ENCODE measurements at regions of chr5 and their contacts with region 1.

Region 1: DNA sequence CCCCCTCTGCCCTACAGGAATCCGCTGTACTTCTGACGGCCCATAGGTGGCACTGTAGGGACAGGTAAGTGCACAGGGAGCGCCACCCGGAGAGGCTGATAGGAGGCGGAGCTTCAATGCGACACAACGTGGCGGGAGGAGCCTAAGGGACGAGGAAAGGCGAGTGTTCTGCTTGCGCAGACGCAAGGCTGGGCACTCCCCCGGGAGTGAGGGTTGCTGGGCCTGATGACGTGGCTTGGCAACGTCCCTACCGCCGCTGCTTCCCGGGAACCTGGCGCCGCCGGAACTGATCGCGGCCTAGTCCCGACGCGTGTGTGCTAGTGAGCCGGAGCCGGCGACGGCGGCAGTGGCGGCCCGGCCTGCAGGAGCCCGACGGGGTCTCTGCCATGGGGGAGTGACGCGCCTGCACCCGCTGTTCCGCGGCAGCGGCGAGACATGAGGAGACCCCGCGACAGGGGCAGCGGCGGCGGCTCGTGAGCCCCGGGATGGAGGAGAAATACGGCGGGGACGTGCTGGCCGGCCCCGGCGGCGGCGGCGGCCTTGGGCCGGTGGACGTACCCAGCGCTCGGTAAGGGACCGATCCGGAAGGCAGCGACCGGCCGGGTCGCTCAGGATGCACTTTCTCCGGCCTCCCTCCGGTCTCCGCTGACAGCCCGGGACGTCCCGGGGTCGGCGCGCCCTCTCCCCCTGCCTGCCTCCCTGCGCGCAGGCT is at the start of gene SLC30A5:
- DNase-seq: peak; percentile 99 to 100
- H3K4me3 ChIP-seq: peak within 1 kb of the TSS; percentile 73 to 87 (median 84)
- H3K27ac ChIP-seq: peak within 1 kb of the TSS; percentile 93 to 99 (median 98)
- H3K4me1 ChIP-seq: peaks cover 15 to 47% (median 37%) of the 10 kb centered on the region in 4 donors
- H3K27me3 ChIP-seq: no peaks in the 10 kb centered on the region
- CTCF ChIP-seq: peak in 6 of 7 experiments; percentile 70 to 99 (median 92)
- EP300 ChIP-seq: no peak
- POLR2A ChIP-seq: peak in 2 of 4 donors; percentile 17 to 88
- total RNA-seq, gene SLC30A5: 9.3 to 67.6 (median 64.7) TPM

Region 2: DNA sequence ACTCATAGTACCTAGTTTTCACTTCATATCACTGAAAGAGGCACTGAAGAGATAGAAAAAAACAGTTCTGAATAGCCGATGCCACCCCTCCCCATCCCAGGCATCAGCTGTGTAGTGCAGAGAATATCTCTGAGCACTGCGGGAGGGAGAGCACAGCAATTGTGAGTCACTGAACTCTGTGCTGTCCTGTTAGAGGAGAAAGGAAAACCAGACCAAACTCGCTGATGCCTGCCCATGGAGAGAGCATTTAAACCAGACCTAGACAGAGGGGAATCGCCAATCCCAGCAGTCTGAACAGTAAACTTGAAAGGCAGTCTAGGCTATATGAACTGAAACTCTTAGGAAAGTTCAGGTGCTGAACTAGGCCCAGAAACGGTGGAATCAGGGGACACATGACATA is 120.2 kb before region 1 on chr5:
- intact Hi-C with region 1: no loop called
- DNase-seq: no peak
- H3K4me3 ChIP-seq: no peak overlapping the region
- H3K27ac ChIP-seq: no peak overlapping the region
- H3K4me1 ChIP-seq: no peaks in the 10 kb centered on the region
- H3K27me3 ChIP-seq: peaks cover 0 to 4% (median 0%) of the 10 kb centered on the region in 3 donors
- CTCF ChIP-seq: no peak
- EP300 ChIP-seq: no peak
- POLR2A ChIP-seq: no peak

Region 3: DNA sequence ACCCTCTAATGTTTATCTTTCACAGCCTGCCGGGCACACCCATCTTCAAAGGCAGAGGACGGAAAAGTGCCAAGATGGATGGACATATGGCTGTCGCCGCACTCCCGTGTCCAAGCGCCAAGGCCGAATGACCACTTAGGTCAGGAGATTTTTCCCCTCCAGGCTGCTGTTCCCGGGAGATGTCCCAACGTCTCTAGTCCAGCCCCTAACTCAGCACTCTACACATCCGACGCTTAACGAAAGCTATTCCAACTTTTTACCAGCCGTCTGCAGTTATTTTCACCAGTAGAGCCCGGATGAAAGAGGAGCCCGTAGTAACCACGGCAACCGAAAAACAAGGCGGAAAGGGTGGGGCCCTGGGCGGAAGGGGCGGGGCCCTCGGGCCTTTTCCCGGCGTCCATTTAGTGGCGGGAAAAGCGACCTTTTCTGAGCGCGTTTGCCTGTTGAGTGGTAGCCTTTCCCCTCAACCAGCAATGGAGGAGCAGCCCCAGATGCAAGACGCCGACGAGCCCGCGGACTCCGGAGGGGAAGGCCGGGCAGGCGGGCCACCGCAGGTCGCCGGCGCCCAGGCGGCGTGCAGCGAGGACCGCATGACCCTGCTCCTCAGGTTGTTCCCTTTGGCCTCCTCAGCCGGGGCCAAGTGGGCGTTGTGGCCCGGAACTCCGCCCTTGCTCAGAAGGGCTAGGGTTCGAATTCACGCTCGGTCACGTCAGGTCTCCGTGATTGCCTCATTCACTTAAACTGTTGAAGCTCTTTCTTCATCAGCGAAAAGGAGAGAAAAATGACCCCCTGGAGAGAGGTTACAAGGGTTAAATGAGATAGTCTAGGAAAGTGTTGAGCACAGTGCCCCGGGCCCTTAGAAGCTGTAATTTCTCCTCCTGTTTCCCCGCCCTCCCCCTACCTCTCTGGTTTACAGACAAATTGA is 95.5 kb after region 1 on chr5 and contains the start of gene CENPH:
- intact Hi-C with region 1: loop called (anchors 10 kb)
- DNase-seq: peak; percentile 88 to 97
- H3K4me3 ChIP-seq: peak within 1 kb of the TSS; percentile 69 to 83 (median 82)
- H3K27ac ChIP-seq: peak within 1 kb of the TSS; percentile 53 to 85 (median 76)
- H3K4me1 ChIP-seq: peaks cover 14 to 21% (median 17%) of the 10 kb centered on the region in 4 donors
- H3K27me3 ChIP-seq: no peaks in the 10 kb centered on the region
- CTCF ChIP-seq: no peak
- EP300 ChIP-seq: no peak
- POLR2A ChIP-seq: no peak
- total RNA-seq, gene CENPH: 0.45 to 15.6 (median 1.8) TPM

Region 4: GRCh38 chr5:69369369-69370121 is 275.6 kb after region 1 on chr5 and contains the starts of genes AK6, RAD17 and TAF9:
- intact Hi-C with region 1: loop called (anchors 10 kb)
- DNase-seq: peak; percentile 93 to 98
- H3K4me3 ChIP-seq: peak within 1 kb of the TSS; percentile 64 to 95 (median 76)
- H3K27ac ChIP-seq: peak within 1 kb of the TSS; percentile 94 to 100 (median 95)
- H3K4me1 ChIP-seq: peaks cover 10 to 53% (median 34%) of the 10 kb centered on the region in 4 donors
- H3K27me3 ChIP-seq: no peaks in the 10 kb centered on the region
- CTCF ChIP-seq: no peak
- EP300 ChIP-seq: no peak
- POLR2A ChIP-seq: peak in 1 of 4 donors; percentile 19
- total RNA-seq, gene AK6: 17.5 to 42.0 (median 32.7) TPM in 3 of 5 donors, not detected in the others
- total RNA-seq, gene RAD17: 11.1 to 42.5 (median 30.3) TPM
- total RNA-seq, gene TAF9: 1.2 to 54.2 (median 8.5) TPM